Head of caudate nucleus (tissue), 42 donors: ENCODE measurements at regions of chr4 and their contacts with region 1.

Region 1: GRCh38 chr4:56907489-56908205 is at the start of gene REST:
- DNase-seq: peak; percentile 12 to 87 (median 70)

Region 2: GRCh38 chr4:56698329-56698728 is 209.3 kb before region 1 on chr4:
- intact Hi-C with region 1: no loop called
- DNase-seq: no peak

Region 3: GRCh38 chr4:56977321-56978012 is 69.8 kb after region 1 on chr4 and contains the start of gene NOA1:
- intact Hi-C with region 1: loop called (anchors 5 kb)
- DNase-seq: peak; percentile 90 to 99 (median 97)

Region 4: DNA sequence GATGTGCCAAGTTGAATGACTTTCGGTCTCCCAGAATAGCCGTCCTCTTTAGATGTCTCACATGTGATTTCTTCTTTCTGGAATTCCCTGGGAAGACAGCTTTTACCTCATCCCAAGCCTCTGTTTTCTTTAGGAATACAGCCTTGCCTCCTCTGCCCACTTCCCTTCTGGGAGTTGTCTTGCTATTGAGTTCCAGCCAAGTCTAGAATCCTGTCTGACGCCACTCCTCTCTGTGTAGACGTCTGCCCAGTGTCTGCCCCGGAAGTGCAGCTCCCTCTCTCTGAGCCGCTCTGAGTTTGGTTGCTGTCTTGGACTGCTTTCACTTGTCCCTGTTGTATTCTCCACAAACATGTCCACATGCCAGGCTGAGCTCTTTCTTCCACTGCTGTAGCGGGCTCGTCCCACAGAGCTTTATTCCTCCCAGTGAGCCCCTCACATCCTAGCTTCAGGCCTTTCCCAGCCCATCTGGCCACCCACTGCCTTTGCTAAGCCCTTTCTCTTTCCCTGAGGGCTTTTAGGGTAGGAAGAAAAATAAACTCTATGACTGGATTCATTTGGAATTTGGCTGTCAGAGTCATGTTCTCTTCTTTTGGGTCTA is 211.5 kb after region 1 on chr4:
- intact Hi-C with region 1: no loop called
- DNase-seq: peak in 13 of 42 donors; percentile 3 to 52 (median 30)